Caco-2 (cell line): ENCODE measurements at regions of chr5 and their contacts with region 1.

Region 1: DNA sequence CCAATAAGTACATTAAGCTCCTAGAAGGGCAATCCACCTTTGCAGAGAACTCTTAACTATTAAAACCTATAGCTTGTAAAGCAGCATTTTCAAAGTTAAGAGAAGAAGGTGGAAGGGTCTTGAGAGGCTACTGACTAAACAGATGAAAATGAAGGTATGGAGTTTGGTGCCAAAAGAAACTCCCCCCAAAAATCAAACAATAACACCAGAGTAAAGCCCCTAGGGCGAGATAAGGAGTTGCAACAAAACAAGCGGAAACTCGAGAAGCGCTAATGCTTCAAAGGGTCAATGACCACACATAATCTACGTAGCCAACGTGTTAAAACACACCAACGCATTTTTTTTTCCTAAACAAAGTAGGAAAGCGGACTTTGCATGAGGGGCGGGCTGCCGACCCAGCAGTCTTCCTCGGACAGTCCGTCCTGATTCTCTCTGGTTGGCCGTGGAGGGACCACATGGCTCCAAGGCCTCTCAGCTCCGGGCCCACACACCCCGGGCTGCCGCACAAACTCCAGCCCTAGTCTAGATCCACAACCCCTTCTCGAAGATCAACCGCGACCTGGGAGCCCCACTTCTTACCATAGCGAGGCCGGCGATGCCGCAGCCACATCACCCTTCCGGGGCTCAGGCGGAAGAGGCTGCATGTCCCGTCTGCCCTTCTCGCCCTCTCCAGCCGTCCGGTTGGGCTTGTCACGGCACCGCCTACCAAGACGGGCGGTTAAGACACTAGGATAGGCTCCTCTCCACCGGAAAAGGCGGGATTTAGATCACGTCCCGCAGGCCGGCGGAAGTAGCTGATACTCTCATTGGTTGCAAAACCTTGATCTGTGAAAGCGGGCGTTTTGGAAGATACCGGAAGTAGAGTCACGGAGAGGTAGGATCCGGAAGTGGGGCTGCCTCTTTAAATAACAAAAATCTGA is at the starts of genes TMEM167A and XRCC4:
- DNase-seq: peak; percentile 96 to 98
- H3K4me3 ChIP-seq: peak within 1 kb of the TSS; percentile 94
- H3K4me3 Mint-ChIP-seq: peak within 1 kb of the TSS; percentile 99
- H3K27ac Mint-ChIP-seq: peak within 1 kb of the TSS; percentile 100
- H3K4me1 ChIP-seq: peaks cover 4% of the 10 kb centered on the region; the same call in 1 of the 2 replicates
- H3K4me1 Mint-ChIP-seq: no peaks in the 10 kb centered on the region
- H3K27me3 ChIP-seq: no peaks in the 10 kb centered on the region
- H3K27me3 Mint-ChIP-seq: no peaks in the 10 kb centered on the region
- CTCF ChIP-seq: no peak
- total RNA-seq, gene TMEM167A: 85.0 and 97.1 TPM in 2 replicates
- total RNA-seq, gene XRCC4: 13.0 and 13.5 TPM in 2 replicates

Region 2: DNA sequence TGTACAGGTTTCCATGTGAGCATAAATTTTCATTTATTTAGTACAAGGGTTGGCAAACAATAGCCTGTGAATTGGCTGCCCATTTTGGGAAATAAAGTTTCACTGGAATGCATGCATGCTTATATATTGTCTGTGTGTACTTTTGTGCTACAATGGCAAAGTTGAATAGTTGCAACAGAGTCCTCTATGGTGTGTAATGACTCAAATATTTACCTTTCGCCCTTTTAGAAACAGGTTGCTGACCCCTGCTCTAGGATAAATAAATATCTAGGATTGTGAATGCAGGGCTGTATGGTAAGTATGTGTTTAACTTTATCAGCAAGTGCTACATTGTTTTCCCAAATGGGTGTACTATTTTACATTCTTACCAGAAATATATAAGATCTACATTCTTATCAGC is 47.6 kb after region 1 on chr5:
- CTCF ChIA-PET with region 1: no interaction called
- POLR2A ChIA-PET with region 1: interaction called, 3 read pairs
- intact Hi-C with region 1: loop called (anchors 5 kb)
- DNase-seq: peak in 1 of 2 experiments; percentile 39
- H3K4me3 ChIP-seq: no peak overlapping the region
- H3K4me3 Mint-ChIP-seq: no peak overlapping the region
- H3K27ac Mint-ChIP-seq: no peak overlapping the region
- H3K4me1 ChIP-seq: peaks cover 21% of the 10 kb centered on the region
- H3K4me1 Mint-ChIP-seq: peaks cover 18% of the 10 kb centered on the region
- H3K27me3 ChIP-seq: no peaks in the 10 kb centered on the region
- H3K27me3 Mint-ChIP-seq: no peaks in the 10 kb centered on the region
- CTCF ChIP-seq: no peak

Region 3: DNA sequence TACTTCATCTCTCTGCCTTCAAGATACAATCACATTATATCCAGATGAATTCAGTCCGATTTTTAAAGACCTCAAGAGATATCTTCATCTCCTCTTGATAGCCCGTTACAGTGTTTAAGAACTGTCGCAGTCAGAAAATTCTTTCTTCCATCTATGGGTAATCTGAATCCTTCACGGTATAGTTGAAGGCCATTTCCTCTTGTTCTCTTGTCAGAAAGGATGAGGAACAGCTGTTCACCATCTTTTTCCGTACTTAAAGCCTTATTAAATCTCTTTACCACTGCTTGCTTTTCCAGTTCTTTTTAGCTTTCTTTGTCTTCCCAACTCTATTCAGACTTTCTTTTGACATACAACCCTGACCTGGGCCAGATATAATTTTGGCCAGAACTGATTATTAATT is 122.1 kb after region 1 on chr5:
- CTCF ChIA-PET with region 1: no interaction called
- POLR2A ChIA-PET with region 1: no interaction called
- intact Hi-C with region 1: no loop called
- DNase-seq: no peak
- H3K4me3 ChIP-seq: no peak overlapping the region
- H3K4me3 Mint-ChIP-seq: no peak overlapping the region
- H3K27ac Mint-ChIP-seq: no peak overlapping the region
- H3K4me1 ChIP-seq: no peaks in the 10 kb centered on the region
- H3K4me1 Mint-ChIP-seq: no peaks in the 10 kb centered on the region
- H3K27me3 ChIP-seq: no peaks in the 10 kb centered on the region
- H3K27me3 Mint-ChIP-seq: no peaks in the 10 kb centered on the region
- CTCF ChIP-seq: no peak

Region 4: GRCh38 chr5:83265318-83265717 is 188.3 kb after region 1 on chr5:
- CTCF ChIA-PET with region 1: no interaction called
- POLR2A ChIA-PET with region 1: no interaction called
- intact Hi-C with region 1: loop called (anchors 5 kb)
- DNase-seq: peak; percentile 39 to 49
- H3K4me3 ChIP-seq: no peak overlapping the region
- H3K4me3 Mint-ChIP-seq: no peak overlapping the region
- H3K27ac Mint-ChIP-seq: no peak overlapping the region
- H3K4me1 ChIP-seq: peaks cover 4% of the 10 kb centered on the region; the same call in 1 of the 2 replicates
- H3K4me1 Mint-ChIP-seq: no peaks in the 10 kb centered on the region
- H3K27me3 ChIP-seq: no peaks in the 10 kb centered on the region
- H3K27me3 Mint-ChIP-seq: no peaks in the 10 kb centered on the region
- CTCF ChIP-seq: no peak